ENCODE measurements at regions of chr10 and their contacts with region 1.

Region 1: GRCh38 chr10:110746254-110746826 is 102.2 kb downstream of the RBM20 start:
- DNase-seq: peak; percentile 58 to 68
- H3K4me3 ChIP-seq: no peak overlapping the region
- H3K27ac ChIP-seq: no peak overlapping the region
- H3K4me1 ChIP-seq: no peaks in the 10 kb centered on the region
- H3K27me3 ChIP-seq: no peaks in the 10 kb centered on the region
- CTCF ChIP-seq: peak; percentile 83

Region 2: DNA sequence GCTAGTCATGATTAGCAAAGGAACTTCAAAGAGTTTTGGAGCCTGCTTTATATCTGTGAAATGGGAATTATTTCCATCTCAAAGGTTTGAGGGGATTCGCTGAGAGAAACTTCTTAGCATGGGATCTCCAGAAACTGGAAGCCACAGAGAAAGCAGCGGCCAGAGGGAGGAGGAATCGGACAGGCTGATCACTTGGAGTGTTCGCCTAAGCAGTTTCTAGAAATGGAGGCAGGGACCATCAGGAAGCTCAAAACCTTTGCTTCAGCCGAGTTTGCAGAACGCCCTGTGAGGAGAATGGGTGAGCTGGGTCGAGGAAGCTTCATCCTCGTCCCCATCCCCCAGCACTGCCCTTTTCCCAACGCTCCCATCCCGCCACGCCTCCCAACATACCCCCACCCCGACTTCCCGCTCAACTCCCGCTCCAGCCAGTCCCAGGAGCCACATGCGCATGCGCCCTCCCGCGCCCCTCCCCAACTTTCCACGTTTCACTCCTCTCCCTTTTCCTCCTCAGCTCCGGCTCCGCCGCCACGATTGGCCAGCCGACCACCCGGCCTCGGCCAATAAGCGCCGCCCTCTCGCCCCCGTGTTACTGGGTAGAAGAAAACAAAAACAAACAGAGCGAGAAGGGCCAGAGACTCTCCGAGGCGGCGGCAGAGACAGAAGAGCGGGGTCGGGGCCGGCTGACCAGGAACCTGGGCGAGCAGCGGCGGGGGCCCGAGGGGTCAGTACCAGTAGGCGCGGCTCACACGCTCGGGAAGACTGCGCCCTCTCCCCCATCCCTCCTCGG is 125.2 kb after region 1 on chr10 and contains the start of gene PDCD4:
- CTCF ChIA-PET with region 1: interaction called, 3 read pairs
- POLR2A ChIA-PET with region 1: no interaction called
- intact Hi-C with region 1: loop called (anchors 5 kb)
- DNase-seq: peak; percentile 82 to 95
- H3K4me3 ChIP-seq: peak within 1 kb of the TSS; percentile 80
- H3K27ac ChIP-seq: peak within 1 kb of the TSS; percentile 19; the same call in 1 of the 2 replicates
- H3K4me1 ChIP-seq: peaks cover 14% of the 10 kb centered on the region
- H3K27me3 ChIP-seq: no peaks in the 10 kb centered on the region
- CTCF ChIP-seq: no peak
- total RNA-seq, gene PDCD4: 92.4 and 96.4 TPM in 2 replicates

Region 3: GRCh38 chr10:110893559-110894179 is 147.3 kb after region 1 on chr10:
- CTCF ChIA-PET with region 1: interaction called, 4 read pairs
- POLR2A ChIA-PET with region 1: no interaction called
- intact Hi-C with region 1: loop called (anchors 1 kb)
- DNase-seq: no peak
- H3K4me3 ChIP-seq: no peak overlapping the region
- H3K27ac ChIP-seq: no peak overlapping the region
- H3K4me1 ChIP-seq: no peaks in the 10 kb centered on the region
- H3K27me3 ChIP-seq: no peaks in the 10 kb centered on the region
- CTCF ChIP-seq: peak; percentile 65

Region 4: GRCh38 chr10:111360260-111360925 is 614.1 kb after region 1 on chr10:
- CTCF ChIA-PET with region 1: no interaction called
- POLR2A ChIA-PET with region 1: no interaction called
- intact Hi-C with region 1: loop called (anchors 5 kb)
- DNase-seq: peak in 1 of 2 experiments; percentile 10
- H3K4me3 ChIP-seq: no peak overlapping the region
- H3K27ac ChIP-seq: no peak overlapping the region
- H3K4me1 ChIP-seq: no peaks in the 10 kb centered on the region
- H3K27me3 ChIP-seq: no peaks in the 10 kb centered on the region; the same call in 1 of the 2 replicates
- CTCF ChIP-seq: peak; percentile 29; the same call in 1 of the 2 replicates

Measured in PC-9 (cell line).